Caco-2 (cell line): ENCODE measurements at regions of chr17 and their contacts with region 1.

Region 1: DNA sequence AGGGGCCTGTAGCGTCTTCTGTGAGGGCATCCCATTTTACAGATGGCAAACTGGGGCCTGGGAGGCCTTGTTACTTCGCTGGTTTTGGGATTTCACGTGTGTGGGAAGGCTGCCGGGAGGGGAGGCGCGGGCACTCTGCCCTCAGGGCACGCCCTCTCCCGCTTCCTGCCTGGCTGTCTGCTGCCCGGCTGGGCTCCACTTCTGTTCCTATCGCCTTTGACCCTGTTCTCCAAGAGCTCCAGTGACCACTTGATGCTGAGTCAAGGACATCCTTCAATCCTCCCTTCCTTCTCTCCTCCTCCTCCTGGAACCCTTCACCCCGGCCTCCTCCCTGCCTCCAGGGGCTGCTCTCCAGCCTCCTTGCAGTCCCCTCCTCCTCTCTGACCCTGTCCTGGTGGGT is 16.0 kb downstream of the SPNS3 start:
- DNase-seq: no peak
- H3K4me3 ChIP-seq: no peak overlapping the region
- H3K4me3 Mint-ChIP-seq: no peak overlapping the region
- H3K27ac Mint-ChIP-seq: no peak overlapping the region
- H3K4me1 ChIP-seq: peaks cover 6% of the 10 kb centered on the region
- H3K4me1 Mint-ChIP-seq: peaks cover 7% of the 10 kb centered on the region
- H3K27me3 ChIP-seq: no peaks in the 10 kb centered on the region
- H3K27me3 Mint-ChIP-seq: no peaks in the 10 kb centered on the region
- CTCF ChIP-seq: no peak

Region 2: DNA sequence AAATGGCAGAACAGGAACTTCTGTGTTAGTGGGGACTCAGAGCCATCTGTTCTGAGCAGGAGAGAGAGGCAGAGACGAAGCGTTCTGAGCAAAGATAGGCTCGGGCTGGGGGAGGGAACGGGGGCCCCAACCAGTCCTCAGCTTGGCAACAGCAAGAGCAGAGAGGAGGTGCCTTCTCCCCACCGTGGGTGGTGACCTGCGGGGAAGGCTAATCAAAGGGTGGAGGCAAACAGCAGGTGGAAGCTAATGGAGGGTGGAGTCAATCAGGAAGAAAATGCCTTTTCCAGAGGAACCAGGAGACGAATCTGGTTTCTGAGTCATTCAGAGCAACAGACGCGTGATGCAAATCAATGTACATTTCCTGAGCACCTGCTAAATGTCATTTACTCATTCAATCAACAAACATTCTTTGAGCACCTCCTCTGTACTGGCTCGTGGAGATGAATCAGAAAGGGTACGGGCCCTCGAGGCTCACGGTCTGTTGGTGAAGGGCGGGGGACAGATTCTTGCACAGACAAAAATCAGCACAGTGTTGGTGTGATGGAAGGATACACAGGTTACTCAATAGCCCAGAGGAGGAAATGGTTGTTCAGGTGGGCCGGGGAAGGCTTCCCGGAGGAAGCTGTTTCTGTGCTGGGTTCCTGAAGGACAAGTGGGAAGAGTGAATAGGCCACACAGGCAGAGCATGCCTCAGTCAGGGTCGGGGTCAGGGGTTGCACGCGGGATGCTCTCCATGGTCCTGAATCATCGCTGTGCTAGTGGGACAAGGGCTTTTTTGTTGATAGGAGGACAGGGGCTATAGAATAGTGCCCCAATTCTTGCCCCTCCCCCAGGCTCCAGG is 43.2 kb after region 1 on chr17:
- CTCF ChIA-PET with region 1: no interaction called
- POLR2A ChIA-PET with region 1: no interaction called
- intact Hi-C with region 1: loop called (anchors 1 kb)
- DNase-seq: peak; percentile 78 to 82
- H3K4me3 ChIP-seq: no peak overlapping the region
- H3K4me3 Mint-ChIP-seq: no peak overlapping the region
- H3K27ac Mint-ChIP-seq: no peak overlapping the region
- H3K4me1 ChIP-seq: no peaks in the 10 kb centered on the region
- H3K4me1 Mint-ChIP-seq: peaks cover 21% of the 10 kb centered on the region
- H3K27me3 ChIP-seq: no peaks in the 10 kb centered on the region
- H3K27me3 Mint-ChIP-seq: no peaks in the 10 kb centered on the region
- CTCF ChIP-seq: no peak

Region 3: GRCh38 chr17:4509923-4510617 is 60.3 kb after region 1 on chr17:
- CTCF ChIA-PET with region 1: no interaction called
- POLR2A ChIA-PET with region 1: no interaction called
- intact Hi-C with region 1: loop called (anchors 10 kb)
- DNase-seq: no peak
- H3K4me3 ChIP-seq: no peak overlapping the region
- H3K4me3 Mint-ChIP-seq: no peak overlapping the region
- H3K27ac Mint-ChIP-seq: no peak overlapping the region
- H3K4me1 ChIP-seq: peaks cover 24% of the 10 kb centered on the region
- H3K4me1 Mint-ChIP-seq: peaks cover 8% of the 10 kb centered on the region
- H3K27me3 ChIP-seq: no peaks in the 10 kb centered on the region
- H3K27me3 Mint-ChIP-seq: no peaks in the 10 kb centered on the region
- CTCF ChIP-seq: no peak